Thyroid gland (tissue), 4 donors: ENCODE measurements at regions of chr19 and their contacts with region 1.

Region 1: DNA sequence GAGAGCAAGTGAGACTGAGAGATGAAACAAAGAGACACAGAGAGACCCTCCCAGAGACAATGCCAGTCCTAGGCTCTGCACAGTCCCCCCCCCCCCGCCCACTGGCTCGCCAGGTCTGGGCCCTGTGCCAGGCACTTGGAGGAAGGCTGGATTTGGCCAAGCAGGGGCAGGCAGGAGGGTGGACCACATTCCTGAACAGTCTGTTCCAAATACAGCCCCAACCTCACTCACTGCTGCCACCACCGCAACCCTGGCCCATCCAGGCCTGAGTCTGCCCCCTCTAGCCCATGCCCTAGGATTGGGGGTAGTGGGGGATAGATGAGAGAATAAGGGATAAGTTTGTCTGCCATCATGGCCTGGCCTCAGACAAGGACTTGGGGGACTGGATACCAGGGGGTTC is 19.0 kb downstream of the CYP2F1 start:
- DNase-seq: peak; percentile 66
- H3K4me3 ChIP-seq: no peak overlapping the region
- H3K27ac ChIP-seq: no peak overlapping the region
- H3K4me1 ChIP-seq: no peaks in the 10 kb centered on the region
- H3K27me3 ChIP-seq: no peaks in the 10 kb centered on the region
- CTCF ChIP-seq: no peak
- POLR2A ChIP-seq: no peak

Region 2: GRCh38 chr19:40650749-40651305 is 482.4 kb before region 1 on chr19:
- intact Hi-C with region 1: loop called (anchors 10 kb)
- DNase-seq: no peak
- H3K4me3 ChIP-seq: no peak overlapping the region
- H3K27ac ChIP-seq: peak overlapping the region in 1 of 3 donors; percentile 7
- H3K4me1 ChIP-seq: peaks cover 10 to 23% of the 10 kb centered on the region in 2 donors
- H3K27me3 ChIP-seq: no peaks in the 10 kb centered on the region
- CTCF ChIP-seq: no peak
- POLR2A ChIP-seq: no peak

Region 3: GRCh38 chr19:41172297-41173164 is 39.3 kb after region 1 on chr19:
- intact Hi-C with region 1: no loop called
- DNase-seq: no peak
- H3K4me3 ChIP-seq: no peak overlapping the region
- H3K27ac ChIP-seq: no peak overlapping the region
- H3K4me1 ChIP-seq: peaks cover 0 to 4% of the 10 kb centered on the region in 2 donors
- H3K27me3 ChIP-seq: no peaks in the 10 kb centered on the region
- CTCF ChIP-seq: no peak
- POLR2A ChIP-seq: no peak

Region 4: GRCh38 chr19:41233748-41234240 is 100.5 kb after region 1 on chr19:
- intact Hi-C with region 1: no loop called
- DNase-seq: no peak
- H3K4me3 ChIP-seq: no peak overlapping the region
- H3K27ac ChIP-seq: no peak overlapping the region
- H3K4me1 ChIP-seq: no peaks in the 10 kb centered on the region
- H3K27me3 ChIP-seq: no peaks in the 10 kb centered on the region
- CTCF ChIP-seq: no peak
- POLR2A ChIP-seq: no peak